Mammary epithelial cell (primary cell): ENCODE measurements at regions of chr19 and their contacts with region 1.

Region 1: DNA sequence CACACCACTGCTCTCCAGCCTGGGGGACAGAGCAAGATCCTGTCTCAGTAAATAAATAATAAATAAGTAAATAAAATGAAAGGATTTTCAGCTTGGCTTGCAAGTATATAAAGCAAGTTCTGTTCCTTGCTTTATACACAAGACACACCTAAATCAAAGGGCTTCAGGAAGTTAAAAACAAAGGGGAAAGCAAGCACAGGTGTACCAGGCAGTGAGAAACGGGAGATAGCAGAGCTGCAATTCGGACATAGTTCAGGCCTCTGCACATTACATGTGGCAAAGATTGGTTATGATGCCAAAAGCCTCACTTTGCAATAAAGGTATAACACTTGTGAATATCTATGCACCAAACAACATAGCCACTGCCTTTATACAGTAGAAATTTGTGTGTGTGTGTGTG is 47.5 kb downstream of the MYO9B start:
- DNase-seq: no peak
- H3K4me3 ChIP-seq: no peak overlapping the region
- H3K27ac ChIP-seq: no peak overlapping the region
- H3K4me1 ChIP-seq: peaks cover 17% of the 10 kb centered on the region
- H3K27me3 ChIP-seq: no peaks in the 10 kb centered on the region
- CTCF ChIP-seq: no peak

Region 2: DNA sequence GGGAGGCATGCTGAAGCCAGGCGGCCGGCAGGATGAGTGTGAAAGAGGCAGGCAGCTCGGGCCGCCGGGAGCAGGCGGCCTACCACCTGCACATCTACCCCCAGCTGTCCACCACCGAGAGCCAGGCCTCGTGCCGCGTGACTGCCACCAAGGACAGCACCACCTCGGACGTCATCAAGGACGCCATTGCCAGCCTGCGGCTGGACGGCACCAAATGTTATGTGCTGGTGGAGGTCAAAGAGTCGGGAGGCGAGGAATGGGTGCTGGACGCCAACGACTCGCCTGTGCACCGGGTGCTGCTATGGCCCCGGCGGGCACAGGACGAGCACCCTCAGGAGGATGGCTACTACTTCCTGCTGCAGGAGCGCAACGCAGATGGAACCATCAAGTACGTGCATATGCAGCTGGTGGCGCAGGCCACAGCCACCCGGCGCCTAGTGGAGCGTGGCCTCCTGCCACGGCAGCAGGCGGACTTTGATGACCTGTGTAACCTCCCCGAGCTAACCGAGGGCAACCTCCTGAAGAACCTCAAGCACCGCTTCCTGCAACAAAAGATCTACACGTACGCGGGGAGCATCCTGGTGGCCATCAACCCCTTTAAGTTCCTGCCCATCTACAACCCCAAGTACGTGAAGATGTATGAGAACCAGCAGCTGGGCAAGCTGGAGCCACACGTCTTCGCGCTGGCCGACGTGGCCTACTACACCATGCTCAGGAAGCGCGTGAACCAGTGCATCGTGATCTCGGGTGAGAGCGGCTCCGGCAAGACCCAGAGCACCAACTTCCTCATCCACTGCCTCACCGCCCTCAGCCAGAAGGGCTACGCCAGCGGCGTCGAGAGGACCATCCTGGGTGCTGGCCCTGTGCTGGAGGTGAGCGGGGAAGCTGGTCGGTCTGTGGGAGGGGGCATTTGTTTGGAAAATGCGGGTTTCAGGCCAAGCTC is 21.1 kb before region 1 on chr19:
- CTCF ChIA-PET with region 1: interaction called, 11 read pairs
- dilution Hi-C with region 1: no loop called
- in situ Hi-C with region 1: no loop called
- intact Hi-C with region 1: no loop called
- DNase-seq: no peak
- H3K4me3 ChIP-seq: no peak overlapping the region
- H3K27ac ChIP-seq: no peak overlapping the region
- H3K4me1 ChIP-seq: peaks cover 6% of the 10 kb centered on the region
- H3K27me3 ChIP-seq: no peaks in the 10 kb centered on the region
- CTCF ChIP-seq: no peak